A549 (cell line): ENCODE measurements at regions of chr5 and their contacts with region 1.

Region 1: DNA sequence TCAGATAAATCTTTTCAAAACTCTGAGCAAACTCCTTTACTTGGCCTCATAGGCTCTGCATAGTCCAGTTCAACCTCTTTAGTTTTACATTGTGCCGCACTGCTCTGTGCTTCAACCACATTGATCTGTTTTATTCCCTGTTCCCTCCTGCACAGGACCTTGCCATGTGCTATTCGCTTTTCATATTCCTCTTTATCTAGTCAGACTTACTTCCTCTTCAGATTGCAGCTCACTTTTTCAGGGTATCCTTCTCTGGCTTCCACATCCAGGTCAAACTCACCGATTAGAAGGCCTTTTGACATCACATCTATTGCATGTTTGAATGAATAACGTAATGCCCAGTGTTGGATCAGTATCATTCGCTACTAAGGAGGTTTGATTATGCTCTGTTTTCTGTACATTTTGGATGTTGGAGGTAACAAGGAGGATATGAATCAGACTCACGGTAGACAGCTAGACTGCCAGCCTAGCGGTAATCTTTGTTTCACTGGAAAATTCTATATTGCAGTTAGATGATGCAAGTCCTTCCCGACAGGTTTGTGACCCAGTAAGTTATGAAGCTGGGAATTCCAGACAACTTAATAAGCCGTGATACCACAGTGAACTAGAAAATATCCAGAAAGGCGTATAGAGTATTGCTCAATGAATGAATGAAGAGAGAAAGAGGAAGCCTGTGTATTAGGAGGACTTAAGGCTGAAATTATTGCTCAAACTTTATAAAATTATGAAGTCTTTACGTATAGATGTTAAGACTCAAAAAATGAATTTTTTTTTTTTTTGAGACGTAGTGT is 65.7 kb downstream of the IQGAP2 start:
- DNase-seq: no peak
- ATAC-seq: no peak
- H3K4me3 ChIP-seq: no peak overlapping the region
- H3K27ac ChIP-seq: peak overlapping the region in 1 of 2 experiments; percentile 2; a peak in 1 of 6 replicates
- H3K4me1 ChIP-seq: peaks cover 33% of the 10 kb centered on the region
- CTCF ChIP-seq: no peak
- EP300 ChIP-seq: no peak
- POLR2A ChIP-seq: no peak
- RAD21 ChIP-seq: no peak

Region 2: DNA sequence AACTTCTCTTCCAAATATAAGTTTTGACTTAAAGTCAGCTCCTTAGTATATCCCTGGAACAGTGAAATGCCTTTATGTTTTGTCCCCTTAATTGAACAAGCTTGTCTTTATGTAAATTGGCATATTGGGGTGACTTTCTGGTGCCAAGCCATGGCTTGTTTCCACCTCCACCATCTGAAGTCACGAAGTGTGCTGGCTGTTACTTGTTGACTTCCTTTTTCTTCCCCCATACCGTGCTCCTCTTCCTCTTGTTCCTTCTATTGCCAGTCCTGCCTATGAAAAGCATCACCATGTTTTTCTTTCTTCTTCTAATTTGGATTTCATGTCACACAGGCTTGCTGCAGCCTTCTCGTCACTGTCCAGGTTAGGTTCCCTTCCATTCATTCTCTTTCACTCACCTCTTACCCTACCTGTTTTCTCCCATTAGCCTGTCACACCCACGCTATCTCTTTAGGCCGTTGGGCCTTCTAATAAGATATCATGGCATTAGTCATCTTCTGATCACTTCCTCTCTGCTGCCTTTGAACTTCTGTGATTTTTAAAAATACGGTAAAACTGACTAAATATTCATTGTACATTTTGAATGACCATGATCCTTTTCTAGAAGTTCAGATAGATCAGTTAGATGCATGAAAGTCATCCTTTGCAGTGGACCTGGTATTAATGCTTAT is 17.7 kb before region 1 on chr5:
- CTCF ChIA-PET with region 1: interaction called, 12 read pairs
- POLR2A ChIA-PET with region 1: no interaction called
- DNase-seq: no peak
- ATAC-seq: no peak
- H3K4me3 ChIP-seq: no peak overlapping the region
- H3K27ac ChIP-seq: no peak overlapping the region
- H3K4me1 ChIP-seq: 0 out of 3 replicates have a peak, but pooled peaks cover 2% of the 10 kb centered on the region
- CTCF ChIP-seq: no peak
- EP300 ChIP-seq: no peak
- POLR2A ChIP-seq: no peak
- RAD21 ChIP-seq: no peak